Activated CD4-positive, alpha-beta memory T cell treated with anti-CD3 and anti-CD28 coated beads for 36 hours (primary cell): ENCODE measurements at regions of chr9 and their contacts with region 1.

Region 1: GRCh38 chr9:115008536-115009270 is 78.3 kb upstream of the TNFSF8 start:
- DNase-seq: peak; percentile 68
- H3K4me3 Mint-ChIP-seq: no peak overlapping the region
- H3K27ac Mint-ChIP-seq: peak overlapping the region; percentile 15
- H3K4me1 Mint-ChIP-seq: peaks cover 86% of the 10 kb centered on the region
- H3K27me3 Mint-ChIP-seq: peaks cover 2% of the 10 kb centered on the region

Region 2: GRCh38 chr9:114587385-114588202 is 421.1 kb before region 1 on chr9 and contains the start of gene ATP6V1G1:
- CTCF ChIA-PET with region 1: no interaction called
- POLR2A ChIA-PET with region 1: no interaction called
- intact Hi-C with region 1: loop called (anchors 10 kb)
- DNase-seq: peak; percentile 100
- H3K4me3 Mint-ChIP-seq: peak within 1 kb of the TSS; percentile 99
- H3K27ac Mint-ChIP-seq: peak within 1 kb of the TSS; percentile 97
- H3K4me1 Mint-ChIP-seq: peaks cover 40% of the 10 kb centered on the region
- H3K27me3 Mint-ChIP-seq: no peaks in the 10 kb centered on the region
- total RNA-seq, gene ATP6V1G1: 32.1 to 38.9 TPM

Region 3: GRCh38 chr9:114696814-114697544 is 311.7 kb before region 1 on chr9:
- CTCF ChIA-PET with region 1: interaction called, 24 read pairs
- POLR2A ChIA-PET with region 1: interaction called, 12 read pairs
- intact Hi-C with region 1: loop called (anchors 1 kb)
- DNase-seq: peak; percentile 88
- H3K4me3 Mint-ChIP-seq: peak overlapping the region; percentile 42
- H3K27ac Mint-ChIP-seq: peak overlapping the region; percentile 99
- H3K4me1 Mint-ChIP-seq: peaks cover 87% of the 10 kb centered on the region
- H3K27me3 Mint-ChIP-seq: peaks cover 2% of the 10 kb centered on the region

Region 4: GRCh38 chr9:114738581-114739316 is 270.0 kb before region 1 on chr9:
- CTCF ChIA-PET with region 1: interaction called, 30 read pairs
- POLR2A ChIA-PET with region 1: interaction called, 3 read pairs
- intact Hi-C with region 1: no loop called
- DNase-seq: peak; percentile 81
- H3K4me3 Mint-ChIP-seq: no peak overlapping the region
- H3K27ac Mint-ChIP-seq: peak overlapping the region; percentile 81
- H3K4me1 Mint-ChIP-seq: peaks cover 52% of the 10 kb centered on the region
- H3K27me3 Mint-ChIP-seq: no peaks in the 10 kb centered on the region

Region 5: DNA sequence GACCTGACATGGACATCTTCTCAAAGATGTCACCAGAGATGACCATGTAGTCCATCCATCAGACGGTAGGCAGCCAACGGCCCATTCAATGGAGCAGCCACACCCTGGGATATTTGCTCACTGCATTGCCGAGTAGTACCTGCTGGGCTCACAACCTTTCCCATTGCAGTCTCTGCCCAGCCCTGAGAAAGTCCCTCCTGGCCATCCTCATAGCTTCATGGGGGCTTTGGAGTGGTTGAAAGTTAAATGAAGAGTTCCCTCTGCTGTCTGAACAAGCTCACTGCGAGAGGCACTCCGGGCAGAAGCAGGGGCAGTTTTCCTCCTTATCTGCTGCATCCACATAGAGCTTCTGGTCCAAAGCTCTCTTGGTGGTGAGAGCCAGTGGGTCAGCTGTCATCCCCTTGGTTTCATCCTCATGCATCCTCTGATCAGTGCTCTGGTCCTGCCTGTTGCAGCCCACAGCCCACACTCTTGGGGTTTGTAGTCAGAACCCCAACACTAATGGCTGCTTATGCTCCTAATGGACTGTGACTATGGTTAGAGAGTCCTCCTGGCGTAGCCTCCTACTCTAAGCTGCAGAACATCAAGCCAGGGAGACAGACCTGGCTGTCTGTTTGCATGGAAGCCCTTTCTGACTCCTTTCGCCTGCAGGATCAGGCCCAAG is 101.7 kb before region 1 on chr9:
- CTCF ChIA-PET with region 1: interaction called, 87 read pairs
- POLR2A ChIA-PET with region 1: interaction called, 3 read pairs
- intact Hi-C with region 1: no loop called
- DNase-seq: peak; percentile 46
- H3K4me3 Mint-ChIP-seq: no peak overlapping the region
- H3K27ac Mint-ChIP-seq: peak overlapping the region; percentile 96
- H3K4me1 Mint-ChIP-seq: peaks cover 92% of the 10 kb centered on the region
- H3K27me3 Mint-ChIP-seq: no peaks in the 10 kb centered on the region

Region 6: DNA sequence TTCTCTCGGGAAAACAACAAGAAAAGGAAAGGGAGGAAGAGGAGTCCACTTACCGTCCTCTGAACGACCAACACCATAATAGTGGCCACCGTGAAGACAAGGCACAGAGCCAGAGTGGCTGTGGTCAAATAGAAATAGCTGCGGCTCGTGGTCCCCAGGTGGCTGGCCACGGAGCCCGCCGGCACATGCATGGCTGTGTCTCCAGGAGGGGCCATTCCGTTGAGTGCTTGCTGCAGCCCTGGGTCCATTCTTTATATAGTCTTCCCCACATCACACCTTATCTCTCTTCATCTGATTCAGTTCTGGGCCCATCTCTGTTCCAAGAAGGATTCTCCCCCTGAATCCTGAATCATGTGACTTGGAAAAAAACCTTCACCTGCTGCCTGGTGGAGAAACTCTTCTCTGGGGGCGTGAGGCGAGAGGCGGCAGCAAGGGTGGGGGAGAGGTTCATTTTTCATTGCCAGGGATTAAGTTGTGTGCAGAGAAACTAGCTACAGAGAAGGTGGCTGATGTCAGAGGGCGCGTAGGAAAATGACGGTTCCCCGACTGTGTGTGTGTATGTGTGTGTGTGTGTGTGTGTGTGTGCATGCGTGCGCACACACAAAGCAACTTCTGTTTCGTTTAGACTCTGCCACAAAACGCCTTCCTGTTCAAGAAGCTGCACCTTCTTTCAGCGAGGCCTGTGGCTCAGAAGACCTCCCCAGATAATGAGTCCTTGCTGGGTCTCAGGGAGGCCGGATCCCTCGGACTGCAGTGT is 78.5 kb before region 1 on chr9 and contains the start of gene TNFSF8:
- CTCF ChIA-PET with region 1: interaction called, 17 read pairs
- POLR2A ChIA-PET with region 1: interaction called, 78 read pairs
- intact Hi-C with region 1: loop called (anchors 1 kb)
- DNase-seq: peak; percentile 90
- H3K4me3 Mint-ChIP-seq: peak within 1 kb of the TSS; percentile 94
- H3K27ac Mint-ChIP-seq: peak within 1 kb of the TSS; percentile 97
- H3K4me1 Mint-ChIP-seq: peaks cover 44% of the 10 kb centered on the region
- H3K27me3 Mint-ChIP-seq: no peaks in the 10 kb centered on the region
- total RNA-seq, gene TNFSF8: 37.9 to 38.7 TPM

Region 7: DNA sequence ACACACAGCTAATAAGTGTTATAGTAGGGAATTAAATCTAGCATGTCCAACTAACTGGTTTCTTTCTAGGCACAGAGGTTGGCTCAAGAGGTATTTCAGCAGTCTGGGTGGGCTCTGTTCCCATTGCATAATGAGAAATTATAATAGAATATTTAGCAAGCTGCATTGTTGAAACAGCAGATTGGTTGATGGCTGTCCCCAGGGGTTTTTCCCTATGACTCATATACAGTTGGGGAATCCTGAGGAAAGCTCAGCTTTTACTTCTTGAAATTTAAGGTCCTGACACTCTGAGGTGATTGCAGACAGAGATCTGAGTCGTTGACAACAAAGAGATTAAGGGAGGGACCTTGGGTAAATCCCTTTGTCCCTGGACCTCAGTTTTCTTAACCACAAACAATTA is 40.0 kb before region 1 on chr9:
- CTCF ChIA-PET with region 1: no interaction called
- POLR2A ChIA-PET with region 1: no interaction called
- intact Hi-C with region 1: no loop called
- DNase-seq: no peak
- H3K4me3 Mint-ChIP-seq: no peak overlapping the region
- H3K27ac Mint-ChIP-seq: no peak overlapping the region
- H3K4me1 Mint-ChIP-seq: peaks cover 24% of the 10 kb centered on the region
- H3K27me3 Mint-ChIP-seq: no peaks in the 10 kb centered on the region

Region 8: GRCh38 chr9:115035841-115036612 is 27.3 kb after region 1 on chr9:
- CTCF ChIA-PET with region 1: interaction called, 4 read pairs
- POLR2A ChIA-PET with region 1: no interaction called
- intact Hi-C with region 1: loop called (anchors 2 kb)
- DNase-seq: peak; percentile 83
- H3K4me3 Mint-ChIP-seq: peak overlapping the region; percentile 62
- H3K27ac Mint-ChIP-seq: peak overlapping the region; percentile 91
- H3K4me1 Mint-ChIP-seq: peaks cover 33% of the 10 kb centered on the region
- H3K27me3 Mint-ChIP-seq: no peaks in the 10 kb centered on the region

Region 9: GRCh38 chr9:115182264-115182663 is 173.6 kb after region 1 on chr9:
- CTCF ChIA-PET with region 1: no interaction called
- POLR2A ChIA-PET with region 1: no interaction called
- intact Hi-C with region 1: no loop called
- DNase-seq: no peak
- H3K4me3 Mint-ChIP-seq: no peak overlapping the region
- H3K27ac Mint-ChIP-seq: no peak overlapping the region
- H3K4me1 Mint-ChIP-seq: no peaks in the 10 kb centered on the region
- H3K27me3 Mint-ChIP-seq: peaks cover 4% of the 10 kb centered on the region